Sigmoid colon (tissue), 7 donors: ENCODE measurements at regions of chr9 and their contacts with region 1.

Region 1: DNA sequence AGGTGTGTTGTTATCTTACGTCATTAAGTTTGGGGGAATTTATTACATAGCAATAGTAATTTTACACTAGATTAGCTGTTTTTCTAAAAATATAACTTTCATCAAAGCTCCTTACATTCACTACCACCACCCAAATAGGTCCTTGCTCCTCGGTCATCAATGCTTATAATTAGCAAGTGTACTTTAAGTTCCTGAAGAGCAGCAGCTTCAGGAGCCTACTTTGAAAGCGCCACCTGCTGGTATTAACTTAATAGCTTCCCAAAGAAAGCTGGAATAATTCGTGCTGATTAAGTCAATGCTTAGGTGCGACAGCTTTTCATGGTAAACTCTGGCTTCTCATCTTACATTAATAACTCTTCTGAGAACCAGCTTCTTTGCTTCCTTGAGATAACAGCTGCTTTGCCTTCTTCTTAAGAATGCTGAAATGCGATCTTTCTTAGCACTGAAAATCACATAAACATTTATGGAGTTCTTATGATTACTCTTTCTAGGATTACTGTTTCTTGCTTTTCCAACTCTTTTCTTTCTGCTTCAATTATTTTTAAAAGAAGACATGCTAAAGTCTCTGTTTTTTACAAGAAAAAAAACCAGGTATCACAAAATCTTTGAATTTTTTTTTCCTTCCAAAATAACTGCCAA is 10.0 kb upstream of the C5 start:
- DNase-seq: no peak
- H3K4me3 ChIP-seq: no peak overlapping the region
- H3K27ac ChIP-seq: no peak overlapping the region
- H3K4me1 ChIP-seq: no peaks in the 10 kb centered on the region
- H3K27me3 ChIP-seq: no peaks in the 10 kb centered on the region
- CTCF ChIP-seq: peak; percentile 39 to 69 (median 53)
- EP300 ChIP-seq: no peak
- POLR2A ChIP-seq: no peak

Region 2: GRCh38 chr9:120755827-120756434 is 304.2 kb before region 1 on chr9:
- intact Hi-C with region 1: loop called (anchors 1 kb)
- DNase-seq: no peak
- H3K4me3 ChIP-seq: no peak overlapping the region
- H3K27ac ChIP-seq: peak overlapping the region in 1 of 4 donors; percentile 24
- H3K4me1 ChIP-seq: peaks cover 0 to 12% (median 7%) of the 10 kb centered on the region in 4 donors
- H3K27me3 ChIP-seq: no peaks in the 10 kb centered on the region
- CTCF ChIP-seq: peak; percentile 65 to 92 (median 86)
- EP300 ChIP-seq: no peak
- POLR2A ChIP-seq: no peak

Region 3: GRCh38 chr9:121483049-121483448 is 422.9 kb after region 1 on chr9:
- intact Hi-C with region 1: no loop called
- DNase-seq: no peak
- H3K4me3 ChIP-seq: no peak overlapping the region
- H3K27ac ChIP-seq: no peak overlapping the region
- H3K4me1 ChIP-seq: peaks cover 0 to 27% (median 0%) of the 10 kb centered on the region in 4 donors
- H3K27me3 ChIP-seq: no peaks in the 10 kb centered on the region
- CTCF ChIP-seq: no peak
- EP300 ChIP-seq: no peak
- POLR2A ChIP-seq: no peak